ENCODE measurements at regions of chr2 and their contacts with region 1.

Region 1: DNA sequence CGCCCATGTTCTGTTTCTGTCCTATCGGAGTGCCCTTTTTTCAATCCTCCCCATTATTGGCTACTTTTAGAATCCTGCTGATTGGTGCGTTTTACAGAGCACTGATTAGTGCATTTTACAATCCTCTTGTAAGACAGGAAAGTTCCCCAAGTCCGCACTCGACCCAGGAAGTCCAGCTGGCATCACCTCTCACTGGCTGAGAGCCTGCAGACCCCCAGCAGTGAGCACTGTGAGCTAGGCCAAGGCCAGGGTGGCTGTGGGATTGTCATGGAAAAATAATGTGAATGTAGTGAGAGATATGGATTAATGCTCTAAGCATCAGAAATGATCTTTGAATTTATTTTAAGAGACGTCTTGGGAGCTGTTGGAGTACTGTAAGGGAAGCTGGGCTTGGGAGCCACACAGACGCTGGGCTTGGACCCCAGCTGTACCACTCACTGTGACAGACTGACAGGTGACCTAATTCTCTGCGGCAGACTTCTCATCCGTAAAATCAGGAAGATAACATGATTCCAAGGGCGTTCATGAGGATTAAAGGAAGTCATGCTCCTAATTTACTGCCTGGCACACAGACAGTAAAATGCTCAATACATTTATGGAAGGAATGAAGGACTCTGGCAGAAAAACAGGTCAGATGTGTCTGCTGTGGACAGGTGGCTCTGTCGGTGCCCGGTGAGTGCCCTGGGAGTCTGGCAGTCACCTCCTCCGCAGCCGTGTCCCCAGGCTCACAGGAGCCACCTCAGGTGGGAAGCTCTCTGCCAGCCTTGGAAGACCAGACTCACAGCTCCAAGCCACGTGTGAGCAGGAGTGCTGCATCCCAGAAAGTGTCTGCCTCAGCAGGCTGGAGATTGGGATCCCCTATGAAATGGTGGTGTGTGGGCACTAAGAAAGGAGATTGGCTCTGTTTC is 105.5 kb downstream of the FAM168B start:
- DNase-seq: no peak
- ATAC-seq: no peak; a peak in 1 of 6 replicates
- H3K4me3 ChIP-seq: no peak overlapping the region
- H3K27ac ChIP-seq: no peak overlapping the region
- H3K4me1 ChIP-seq: no peaks in the 10 kb centered on the region
- CTCF ChIP-seq: no peak
- EP300 ChIP-seq: no peak
- POLR2A ChIP-seq: no peak
- RAD21 ChIP-seq: no peak

Region 2: GRCh38 chr2:130963849-130964793 is 23.7 kb before region 1 on chr2:
- CTCF ChIA-PET with region 1: interaction called, 10 read pairs
- POLR2A ChIA-PET with region 1: no interaction called
- DNase-seq: peak; percentile 65 to 66
- ATAC-seq: peak; percentile 86 to 94
- H3K4me3 ChIP-seq: peak overlapping the region; percentile 50
- H3K27ac ChIP-seq: peak overlapping the region in 1 of 2 experiments; percentile 76; a peak in 4 of 6 replicates
- H3K4me1 ChIP-seq: no peaks in the 10 kb centered on the region
- CTCF ChIP-seq: peak; percentile 56
- EP300 ChIP-seq: no peak
- POLR2A ChIP-seq: no peak
- RAD21 ChIP-seq: peak; percentile 38 to 47; a peak in 4 of 5 replicates